Panc1 (cell line): ENCODE measurements at regions of chr1 and their contacts with region 1.

Region 1: GRCh38 chr1:201224666-201225370 is 34.2 kb downstream of the IGFN1 start:
- DNase-seq: no peak
- ATAC-seq: no peak
- H3K4me3 ChIP-seq: no peak overlapping the region
- H3K27ac ChIP-seq: no peak overlapping the region
- H3K4me1 ChIP-seq: no peaks in the 10 kb centered on the region
- H3K27me3 ChIP-seq: no peaks in the 10 kb centered on the region
- CTCF ChIP-seq: no peak

Region 2: DNA sequence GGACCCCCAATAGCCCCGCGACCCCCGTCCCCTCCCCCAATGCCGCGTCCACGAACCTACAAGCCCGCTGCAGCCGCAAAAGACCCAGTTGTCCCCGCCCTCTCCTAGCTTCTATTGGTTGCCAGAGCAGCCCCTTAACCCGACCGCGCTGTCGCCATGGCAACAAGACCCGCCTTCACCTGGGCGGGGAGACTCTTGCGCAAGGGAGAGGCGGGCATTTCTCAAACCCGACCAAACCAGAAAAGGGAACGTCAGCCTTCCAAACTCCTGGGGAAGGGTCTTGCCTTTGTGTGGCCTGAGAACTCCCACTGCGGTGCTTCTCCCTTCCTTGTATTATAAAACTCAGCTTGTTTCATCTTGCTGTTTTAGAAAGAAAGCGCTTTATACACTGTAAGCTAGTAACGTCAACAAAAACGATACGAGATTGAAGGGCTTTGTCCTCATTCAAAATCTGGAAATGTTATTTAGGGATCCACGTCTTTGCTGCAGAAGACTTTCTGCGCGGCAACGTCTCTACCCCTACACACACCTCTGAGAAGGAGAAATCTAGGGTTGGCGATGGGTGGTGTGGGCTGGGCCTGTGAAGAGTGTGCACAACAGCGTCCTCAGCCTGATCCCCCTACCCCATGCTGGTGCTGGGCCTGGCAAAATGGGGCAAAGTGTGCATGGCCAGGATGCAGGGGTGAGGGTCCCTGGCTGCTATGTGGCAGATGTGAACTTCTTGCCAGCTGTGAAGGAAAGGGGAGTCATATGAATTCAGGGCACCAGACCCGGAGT is 70.2 kb before region 1 on chr1 and contains the start of gene TMEM9:
- CTCF ChIA-PET with region 1: no interaction called
- POLR2A ChIA-PET with region 1: no interaction called
- in situ Hi-C with region 1: no loop called
- intact Hi-C with region 1: loop called (anchors 5 kb)
- DNase-seq: peak; percentile 84
- ATAC-seq: peak; percentile 99
- H3K4me3 ChIP-seq: peak within 1 kb of the TSS; percentile 65 to 72
- H3K27ac ChIP-seq: peak within 1 kb of the TSS; percentile 86
- H3K4me1 ChIP-seq: peaks cover 11% of the 10 kb centered on the region
- H3K27me3 ChIP-seq: no peaks in the 10 kb centered on the region; the same call in 1 of the 2 replicates
- CTCF ChIP-seq: no peak
- total RNA-seq, gene TMEM9: 50.2 TPM

Region 3: DNA sequence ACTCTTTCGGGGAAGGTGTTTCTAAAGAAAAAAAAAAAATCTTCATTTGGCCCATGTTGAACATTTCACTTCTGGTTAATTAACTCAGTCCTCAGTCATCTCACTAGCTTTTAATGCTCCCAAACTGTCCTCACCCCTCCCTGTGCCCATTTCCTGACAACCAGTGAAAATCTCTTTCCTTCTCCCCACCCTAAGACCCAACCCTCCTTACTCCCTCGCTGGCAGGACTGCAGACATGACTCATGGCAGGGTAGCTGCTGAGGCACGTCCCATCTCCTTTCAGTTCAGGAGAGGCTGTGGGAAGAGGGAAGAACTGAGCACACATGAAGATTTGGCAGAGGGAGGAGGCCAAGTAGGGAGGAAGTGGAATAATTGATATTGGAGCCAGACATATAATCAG is 71.0 kb after region 1 on chr1:
- CTCF ChIA-PET with region 1: no interaction called
- POLR2A ChIA-PET with region 1: no interaction called
- in situ Hi-C with region 1: no loop called
- intact Hi-C with region 1: no loop called
- DNase-seq: no peak
- ATAC-seq: no peak
- H3K4me3 ChIP-seq: no peak overlapping the region
- H3K27ac ChIP-seq: no peak overlapping the region
- H3K4me1 ChIP-seq: no peaks in the 10 kb centered on the region
- H3K27me3 ChIP-seq: peaks cover 8% of the 10 kb centered on the region
- CTCF ChIP-seq: no peak